ENCODE measurements at regions of chr21 and their contacts with region 1.

Region 1: GRCh38 chr21:39397646-39398385 is 47.8 kb downstream of the LCA5L start:
- DNase-seq: no peak
- ATAC-seq: no peak
- H3K4me3 ChIP-seq: no peak overlapping the region
- H3K27ac ChIP-seq: no peak overlapping the region
- H3K4me1 ChIP-seq: peaks cover 0 to 9% (median 0%) of the 10 kb centered on the region in 9 donors
- H3K27me3 ChIP-seq: no peaks in the 10 kb centered on the region
- CTCF ChIP-seq: no peak

Region 2: GRCh38 chr21:39204134-39204533 is 193.7 kb before region 1 on chr21:
- intact Hi-C with region 1: loop called in 1 of 10 experiments (anchors 10 kb)
- DNase-seq: no peak
- ATAC-seq: no peak
- H3K4me3 ChIP-seq: no peak overlapping the region
- H3K27ac ChIP-seq: no peak overlapping the region
- H3K4me1 ChIP-seq: no peaks in the 10 kb centered on the region
- H3K27me3 ChIP-seq: no peaks in the 10 kb centered on the region
- CTCF ChIP-seq: peak in 2 of 9 donors; percentile 13 to 15